ENCODE measurements at regions of chr14 and their contacts with region 1.

Region 1: GRCh38 chr14:37595693-37596637 is 536 bp downstream of the TTC6 start:
- DNase-seq: peak in 1 of 2 experiments; percentile 79
- H3K4me3 ChIP-seq: peak overlapping the region; percentile 26 to 60 (median 32); a peak in 5 of 8 replicates
- H3K27ac ChIP-seq: no peak overlapping the region
- H3K4me1 ChIP-seq: peaks cover 0 to 27% (median 13%) of the 10 kb centered on the region in 4 experiments; a peak in 6 of 7 replicates
- H3K27me3 ChIP-seq: peaks cover 82 to 99% (median 93%) of the 10 kb centered on the region in 4 experiments
- CTCF ChIP-seq: no peak
- EP300 ChIP-seq: no peak
- POLR2A ChIP-seq: no peak
- RAD21 ChIP-seq: no peak

Region 2: DNA sequence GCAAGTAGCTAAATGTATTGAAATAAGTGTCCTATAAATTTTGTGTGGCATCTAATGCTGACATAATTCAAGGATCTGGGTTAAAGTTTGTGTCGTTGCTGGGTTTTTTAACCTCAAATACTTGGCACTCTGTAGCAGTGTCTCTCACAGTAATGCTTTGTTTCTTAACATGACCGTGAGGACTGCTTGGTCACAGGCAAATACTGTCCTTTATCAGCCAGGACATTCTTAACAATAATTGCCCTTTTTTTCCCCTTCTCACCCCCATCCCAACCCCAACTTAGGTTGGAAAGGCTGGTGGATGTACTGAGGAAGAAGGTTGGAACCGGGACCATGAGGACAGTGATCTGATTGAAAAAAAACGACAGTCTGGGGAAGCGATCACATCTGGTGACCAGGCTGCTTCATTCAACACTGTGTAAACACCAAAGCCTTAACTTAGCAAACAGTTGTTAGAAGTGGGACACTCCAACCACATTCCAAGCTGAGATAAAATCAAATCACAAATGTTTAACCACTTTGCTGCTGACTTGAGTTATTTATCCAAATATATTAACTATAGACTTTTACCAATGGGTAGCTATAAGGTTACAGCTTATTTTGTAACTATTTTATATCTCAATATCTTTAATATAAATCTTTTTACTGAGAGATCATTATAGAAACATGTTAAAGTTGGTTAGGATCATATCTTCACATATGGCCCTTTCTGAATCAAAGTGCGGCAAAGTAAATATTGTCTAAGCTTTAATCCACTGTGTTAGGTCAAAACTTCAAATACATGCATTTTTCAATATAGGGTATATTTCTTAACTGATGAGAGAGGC is 49.1 kb before region 1 on chr14:
- CTCF ChIA-PET with region 1: no interaction called
- POLR2A ChIA-PET with region 1: no interaction called
- DNase-seq: no peak
- H3K4me3 ChIP-seq: no peak overlapping the region
- H3K27ac ChIP-seq: no peak overlapping the region
- H3K4me1 ChIP-seq: no peaks in the 10 kb centered on the region
- H3K27me3 ChIP-seq: no peaks in the 10 kb centered on the region
- CTCF ChIP-seq: no peak
- EP300 ChIP-seq: no peak
- POLR2A ChIP-seq: no peak
- RAD21 ChIP-seq: no peak

Region 3: DNA sequence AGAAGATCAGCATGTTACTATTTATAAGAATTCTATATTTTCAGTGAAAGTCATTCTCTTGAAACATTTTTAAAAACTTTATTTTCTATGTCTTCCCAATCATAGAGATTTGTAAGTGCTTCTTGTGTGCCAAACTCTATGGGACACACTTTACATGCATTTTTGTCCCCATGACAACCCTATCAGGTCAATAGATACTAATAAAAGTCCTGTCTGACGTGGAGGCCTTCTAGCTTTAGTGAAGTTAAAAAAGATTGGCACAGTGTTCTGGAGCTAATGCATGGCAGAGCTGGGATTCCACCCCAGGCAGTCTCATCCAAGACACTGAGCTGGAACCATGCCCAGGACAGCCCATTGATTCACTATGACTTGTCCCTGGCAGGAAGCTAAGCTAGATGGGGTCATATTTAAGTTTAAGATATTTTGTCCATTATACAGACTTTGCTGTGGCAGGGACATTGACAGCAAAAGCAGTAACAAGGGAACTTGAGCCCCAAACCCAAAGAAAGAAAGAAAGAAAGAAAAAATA is 27.5 kb after region 1 on chr14:
- CTCF ChIA-PET with region 1: interaction called, 37 read pairs
- POLR2A ChIA-PET with region 1: interaction called, 3 read pairs
- DNase-seq: no peak
- H3K4me3 ChIP-seq: no peak overlapping the region
- H3K27ac ChIP-seq: no peak overlapping the region
- H3K4me1 ChIP-seq: no peaks in the 10 kb centered on the region
- H3K27me3 ChIP-seq: peaks cover 16 to 40% (median 31%) of the 10 kb centered on the region in 4 experiments
- CTCF ChIP-seq: no peak
- EP300 ChIP-seq: no peak
- POLR2A ChIP-seq: no peak
- RAD21 ChIP-seq: no peak

Region 4: GRCh38 chr14:37637341-37637740 is 41.4 kb after region 1 on chr14:
- CTCF ChIA-PET with region 1: no interaction called
- POLR2A ChIA-PET with region 1: no interaction called
- DNase-seq: no peak
- H3K4me3 ChIP-seq: no peak overlapping the region
- H3K27ac ChIP-seq: no peak overlapping the region
- H3K4me1 ChIP-seq: no peaks in the 10 kb centered on the region
- H3K27me3 ChIP-seq: no peaks in the 10 kb centered on the region
- CTCF ChIP-seq: no peak
- EP300 ChIP-seq: no peak
- POLR2A ChIP-seq: no peak
- RAD21 ChIP-seq: no peak

Region 5: DNA sequence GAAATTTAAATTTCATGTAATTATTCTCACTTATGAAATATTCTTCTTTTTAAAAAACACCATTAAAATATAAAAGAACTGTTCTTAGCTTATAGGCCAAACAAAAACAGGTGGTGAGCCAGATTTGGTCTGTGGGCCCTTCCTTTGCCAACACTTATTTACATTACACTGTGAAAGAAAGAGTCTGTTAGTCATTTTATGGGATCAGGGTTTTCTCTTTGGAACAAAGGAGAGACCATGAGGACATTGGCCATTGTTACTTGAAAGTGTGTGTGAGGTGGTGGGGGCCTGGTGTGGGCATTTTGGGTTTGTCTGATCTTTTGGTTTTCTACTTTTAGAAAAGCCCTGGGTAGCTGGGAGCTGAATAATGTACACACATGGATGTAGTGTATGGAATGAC is 62.2 kb after region 1 on chr14:
- CTCF ChIA-PET with region 1: no interaction called
- POLR2A ChIA-PET with region 1: no interaction called
- DNase-seq: no peak
- H3K4me3 ChIP-seq: no peak overlapping the region
- H3K27ac ChIP-seq: no peak overlapping the region
- H3K4me1 ChIP-seq: peaks cover 0 to 3% (median 0%) of the 10 kb centered on the region in 4 experiments; a peak in 1 of 7 replicates
- H3K27me3 ChIP-seq: no peaks in the 10 kb centered on the region
- CTCF ChIP-seq: no peak
- EP300 ChIP-seq: no peak
- POLR2A ChIP-seq: no peak
- RAD21 ChIP-seq: no peak